Left lung (tissue), 14 donors: ENCODE measurements at regions of chr7 and their contacts with region 1.

Region 1: DNA sequence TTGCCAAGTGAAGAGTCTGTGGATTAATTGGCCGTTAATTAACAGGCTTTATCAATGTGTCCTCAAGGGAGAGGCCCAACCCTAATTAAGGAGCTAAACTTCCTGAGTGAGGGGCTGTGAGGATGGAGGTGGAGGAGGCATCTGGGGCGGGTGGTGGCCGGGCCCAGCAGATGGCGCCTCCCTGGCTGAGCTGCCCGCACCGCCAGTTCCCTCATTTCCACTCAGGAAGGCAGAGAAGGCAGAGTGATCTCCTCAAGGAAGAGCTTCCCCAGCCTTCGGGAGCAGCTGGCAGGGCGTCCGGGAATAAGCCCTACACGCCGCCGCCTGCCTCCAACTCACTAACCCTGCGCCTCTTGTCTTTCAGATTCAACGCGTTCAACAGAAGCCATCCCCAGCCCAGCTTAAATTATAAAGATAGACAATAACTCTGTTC is 112.2 kb downstream of the CYTH3 start:
- DNase-seq: peak in 3 of 4 donors; percentile 53 to 82 (median 79)
- ATAC-seq: peak; percentile 87
- H3K4me3 ChIP-seq: no peak overlapping the region
- H3K27ac ChIP-seq: peak overlapping the region; percentile 26 to 34
- H3K4me1 ChIP-seq: peaks cover 0 to 7% of the 10 kb centered on the region in 2 donors
- H3K27me3 ChIP-seq: no peaks in the 10 kb centered on the region
- CTCF ChIP-seq: peak; percentile 51 to 55

Region 2: DNA sequence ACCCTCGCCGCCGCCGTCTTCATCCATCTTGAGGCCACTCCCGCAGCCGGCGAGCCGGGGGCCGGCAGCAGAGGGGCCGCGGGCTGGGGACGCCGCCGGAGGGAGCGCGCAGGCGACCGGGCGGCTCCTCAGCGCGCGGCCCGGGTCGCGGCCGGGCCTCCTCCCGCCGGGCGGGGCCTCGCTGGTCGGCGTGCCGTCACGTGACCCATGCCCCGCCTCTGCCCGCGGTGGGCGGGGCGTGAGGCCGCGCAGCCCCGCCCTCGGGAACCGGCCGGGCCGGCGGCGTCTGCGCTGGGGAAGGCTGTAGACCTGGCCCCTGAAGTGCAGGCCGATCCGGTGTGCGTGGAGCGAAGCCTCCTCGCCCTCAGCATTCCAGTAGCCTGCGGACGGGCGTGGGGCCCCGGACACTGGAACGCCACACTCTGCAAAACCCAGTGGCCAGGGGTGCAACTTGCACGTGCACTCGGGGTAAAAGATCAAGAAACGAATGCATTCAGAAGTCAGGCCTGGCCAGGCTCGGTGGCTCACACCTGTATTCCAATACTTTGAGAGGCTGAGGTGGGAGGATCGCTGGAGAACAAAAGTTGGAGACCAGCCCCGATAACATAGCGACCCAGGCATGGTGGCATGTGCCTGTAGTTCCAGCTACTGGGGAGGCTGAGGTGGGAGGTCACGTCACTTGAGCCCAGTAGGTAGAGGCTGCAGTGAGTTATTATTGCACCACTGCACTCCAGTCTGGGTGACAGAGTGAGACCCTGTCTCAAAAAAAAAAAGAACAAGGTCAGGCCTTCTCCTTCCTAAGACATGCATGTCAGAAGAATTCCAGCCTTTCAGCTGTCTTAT is 112.5 kb after region 1 on chr7 and contains the start of gene CYTH3:
- intact Hi-C with region 1: loop called in 1 of 2 experiments (anchors 10 kb)
- DNase-seq: peak; percentile 81 to 97 (median 86)
- ATAC-seq: peak; percentile 97
- H3K4me3 ChIP-seq: peak within 1 kb of the TSS; percentile 79 to 84
- H3K27ac ChIP-seq: peak within 1 kb of the TSS; percentile 33 to 69
- H3K4me1 ChIP-seq: peaks cover 13 to 36% of the 10 kb centered on the region in 2 donors
- H3K27me3 ChIP-seq: peaks cover 0 to 16% of the 10 kb centered on the region in 2 donors
- CTCF ChIP-seq: no peak
- polyA plus RNA-seq, gene CYTH3: 20.7 to 29.8 (median 26.7) TPM

Region 3: DNA sequence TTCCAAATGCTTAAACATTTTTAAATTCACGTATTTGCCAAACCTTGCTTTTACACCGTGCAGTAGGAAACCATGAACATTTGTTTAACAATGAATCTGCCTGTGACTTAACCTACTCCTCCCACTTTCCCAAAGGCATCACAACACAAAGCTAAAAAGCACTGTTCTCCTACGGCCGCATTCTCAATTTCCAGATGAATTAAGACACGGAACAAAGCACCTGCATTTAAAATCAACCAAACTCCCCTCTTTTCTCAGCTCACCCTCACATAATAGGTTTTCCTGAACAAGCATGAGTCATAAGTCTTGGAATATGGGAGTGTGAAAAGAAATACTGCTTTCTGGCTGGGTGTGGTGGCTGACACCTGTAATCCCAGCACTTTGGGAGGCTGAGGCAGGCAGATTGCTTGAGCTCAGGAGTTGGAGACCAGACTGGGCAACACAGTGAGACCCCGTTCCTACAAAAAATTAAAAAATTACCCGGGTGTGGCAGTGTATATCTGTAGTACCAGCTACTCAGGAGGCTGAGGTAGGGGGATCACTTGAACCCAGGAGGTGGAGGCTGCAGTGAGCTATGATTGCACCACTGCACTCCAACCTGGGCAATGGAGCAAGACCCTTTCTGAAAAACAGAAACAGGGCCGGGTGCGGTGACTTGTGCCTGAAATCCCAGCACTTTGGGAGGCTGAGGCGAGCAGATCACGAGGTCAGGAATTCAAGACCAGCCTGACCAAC is 163.9 kb after region 1 on chr7:
- intact Hi-C with region 1: loop called in 1 of 2 experiments (anchors 5 kb)
- DNase-seq: no peak
- ATAC-seq: no peak
- H3K4me3 ChIP-seq: no peak overlapping the region
- H3K27ac ChIP-seq: no peak overlapping the region
- H3K4me1 ChIP-seq: no peaks in the 10 kb centered on the region
- H3K27me3 ChIP-seq: no peaks in the 10 kb centered on the region
- CTCF ChIP-seq: no peak